Prostate gland (tissue), 2 donors: ENCODE measurements at regions of chr7 and their contacts with region 1.

Region 1: GRCh38 chr7:38398725-38399321 is 125.4 kb upstream of the TARP start:
- DNase-seq: peak; percentile 17
- H3K4me3 ChIP-seq: no peak overlapping the region
- H3K27ac ChIP-seq: no peak overlapping the region
- H3K4me1 ChIP-seq: no peaks in the 10 kb centered on the region
- H3K27me3 ChIP-seq: no peaks in the 10 kb centered on the region
- CTCF ChIP-seq: peak; percentile 62 to 72 (median 70)
- POLR2A ChIP-seq: no peak

Region 2: DNA sequence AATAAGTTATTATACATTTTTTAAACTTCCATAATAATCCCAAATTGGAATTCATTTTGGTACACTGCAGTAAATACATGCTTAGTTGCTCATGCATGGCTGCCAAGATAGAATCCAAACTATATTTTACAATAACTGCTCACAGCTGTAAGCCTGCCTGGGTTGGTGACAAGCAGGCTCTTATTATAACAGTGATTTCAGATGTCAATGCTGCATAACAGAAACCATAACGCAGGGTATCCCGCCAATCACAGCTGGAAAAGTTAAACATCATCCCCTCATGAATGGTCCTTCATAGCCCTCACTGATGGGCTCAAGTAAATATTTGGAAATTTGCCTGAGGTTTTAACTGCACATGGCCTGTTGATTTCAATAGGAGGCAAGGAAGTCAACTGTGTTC is 82.6 kb after region 1 on chr7:
- intact Hi-C with region 1: no loop called
- DNase-seq: no peak
- H3K4me3 ChIP-seq: no peak overlapping the region
- H3K27ac ChIP-seq: no peak overlapping the region
- H3K4me1 ChIP-seq: no peaks in the 10 kb centered on the region
- H3K27me3 ChIP-seq: no peaks in the 10 kb centered on the region
- CTCF ChIP-seq: no peak
- POLR2A ChIP-seq: no peak

Region 3: DNA sequence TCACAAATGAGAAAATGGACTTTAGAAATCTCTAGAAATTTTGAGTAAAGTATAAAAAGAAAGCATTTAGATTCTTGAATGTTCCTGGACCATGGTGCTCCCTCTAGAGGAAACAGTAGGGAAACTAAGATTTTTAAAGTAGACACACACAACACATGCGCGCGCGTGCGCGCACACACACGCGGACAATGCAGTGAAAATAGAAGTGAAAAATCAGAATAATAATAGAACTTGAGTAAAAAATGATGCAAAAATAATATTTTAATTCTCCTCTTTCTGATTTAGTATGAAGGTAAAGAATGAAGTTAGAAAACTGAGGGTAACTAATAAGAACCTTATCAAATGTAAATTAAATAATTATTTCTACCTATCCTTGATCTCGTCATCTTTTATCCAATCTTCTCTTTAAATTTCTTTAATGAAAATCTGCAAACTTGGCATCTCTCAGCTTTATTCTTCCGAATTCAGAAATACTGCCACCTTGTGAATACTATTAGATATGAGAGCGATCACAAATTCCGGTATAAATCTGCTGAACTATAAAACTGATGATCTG is 349.3 kb after region 1 on chr7:
- intact Hi-C with region 1: loop called (anchors 10 kb)
- DNase-seq: no peak
- H3K4me3 ChIP-seq: no peak overlapping the region
- H3K27ac ChIP-seq: no peak overlapping the region
- H3K4me1 ChIP-seq: no peaks in the 10 kb centered on the region
- H3K27me3 ChIP-seq: no peaks in the 10 kb centered on the region
- CTCF ChIP-seq: peak in 1 of 4 experiments; percentile 14
- POLR2A ChIP-seq: no peak

Region 4: DNA sequence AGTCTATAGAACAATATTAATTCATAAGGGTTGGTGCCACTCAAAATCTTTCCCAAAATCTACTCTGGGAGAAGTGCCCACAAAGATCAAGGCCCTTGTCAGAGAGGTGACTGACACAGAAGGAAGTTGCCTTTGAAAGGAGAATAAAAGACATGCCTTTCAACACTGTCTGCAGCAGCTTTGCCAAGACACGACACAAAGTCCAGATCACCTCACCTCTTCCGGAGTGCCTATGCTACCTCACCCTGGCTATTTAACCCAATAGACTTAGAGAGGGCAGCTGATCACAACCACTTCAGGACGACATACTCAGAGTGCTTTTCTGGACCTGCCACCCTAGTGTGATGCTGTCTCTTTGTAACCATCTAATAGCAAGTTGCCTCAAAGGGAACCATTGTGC is 1118.4 kb after region 1 on chr7:
- intact Hi-C with region 1: loop called (anchors 5 kb)
- DNase-seq: no peak
- H3K4me3 ChIP-seq: no peak overlapping the region
- H3K27ac ChIP-seq: no peak overlapping the region
- H3K4me1 ChIP-seq: no peaks in the 10 kb centered on the region
- H3K27me3 ChIP-seq: no peaks in the 10 kb centered on the region
- CTCF ChIP-seq: no peak
- POLR2A ChIP-seq: no peak